Esophagus muscularis mucosa (tissue), 4 donors: ENCODE measurements at regions of chr2 and their contacts with region 1.

Region 1: DNA sequence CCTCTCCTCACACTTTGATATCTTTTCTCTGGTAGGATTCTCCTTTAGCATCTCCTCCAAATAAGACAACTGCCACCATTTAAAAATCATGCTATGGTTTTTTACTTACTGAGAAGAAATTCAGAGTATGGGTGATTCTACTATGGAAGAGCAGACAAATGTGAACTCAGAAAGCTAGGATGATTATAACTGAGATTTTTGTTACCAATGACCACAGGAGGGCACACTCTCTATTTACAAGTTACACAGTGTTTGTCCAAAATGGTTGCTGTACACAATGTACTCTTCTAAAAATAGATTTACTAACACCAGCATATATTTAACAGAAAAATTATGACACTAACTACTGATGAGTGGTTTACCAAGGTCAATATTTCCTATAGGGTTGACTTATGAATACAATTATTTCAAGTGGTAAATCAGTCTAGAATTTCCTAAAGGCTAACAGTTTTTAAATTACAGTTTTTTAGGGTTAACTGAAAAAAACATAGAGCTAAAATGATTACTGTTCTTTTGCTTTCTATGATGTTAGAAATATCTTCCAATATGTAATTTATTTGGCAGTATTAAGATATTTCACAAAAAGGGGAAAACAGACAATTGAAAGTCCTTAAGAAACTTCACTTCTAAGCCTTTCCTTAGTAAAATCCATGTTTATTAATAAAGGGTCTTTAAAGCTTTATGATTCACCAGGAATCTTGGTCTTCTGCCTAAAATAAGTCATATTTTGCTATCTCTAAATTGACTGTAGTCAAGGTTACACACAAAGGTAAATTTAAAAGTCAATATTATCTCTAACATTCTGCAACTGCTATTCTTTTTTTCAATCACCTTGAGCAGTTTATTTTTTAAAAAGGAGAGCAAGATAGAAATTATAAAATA is 57.2 kb downstream of the MAP4K3 start:
- DNase-seq: no peak
- H3K4me3 ChIP-seq: no peak overlapping the region
- H3K27ac ChIP-seq: peak overlapping the region; percentile 34 to 54 (median 40)
- H3K4me1 ChIP-seq: peaks cover 31 to 52% (median 50%) of the 10 kb centered on the region in 4 donors
- H3K27me3 ChIP-seq: no peaks in the 10 kb centered on the region
- CTCF ChIP-seq: peak; percentile 56 to 66 (median 62)
- EP300 ChIP-seq: no peak
- POLR2A ChIP-seq: no peak

Region 2: DNA sequence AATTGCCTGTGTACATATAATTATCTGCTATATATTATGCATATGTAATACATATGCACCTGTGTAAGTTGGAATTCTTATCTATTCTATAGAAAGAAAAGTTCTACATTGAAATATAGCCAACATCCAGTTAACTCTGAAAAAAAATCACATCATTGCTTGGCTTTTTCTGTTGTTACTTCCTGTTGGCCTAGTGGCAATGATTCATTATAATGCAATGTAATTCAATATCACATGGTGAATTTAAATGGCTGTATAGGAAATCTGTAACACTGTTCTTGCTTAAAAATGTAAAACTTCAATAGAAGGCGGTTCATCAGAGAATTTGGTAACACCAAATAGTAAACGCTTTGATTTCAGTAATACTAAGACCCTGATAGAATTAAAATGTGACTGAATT is 101.7 kb after region 1 on chr2:
- intact Hi-C with region 1: loop called (anchors 5 kb)
- DNase-seq: no peak
- H3K4me3 ChIP-seq: no peak overlapping the region
- H3K27ac ChIP-seq: no peak overlapping the region
- H3K4me1 ChIP-seq: peaks cover 11 to 18% (median 14%) of the 10 kb centered on the region in 4 donors
- H3K27me3 ChIP-seq: no peaks in the 10 kb centered on the region
- CTCF ChIP-seq: no peak
- EP300 ChIP-seq: no peak
- POLR2A ChIP-seq: no peak

Region 3: GRCh38 chr2:39523308-39524044 is 143.6 kb after region 1 on chr2:
- intact Hi-C with region 1: loop called (anchors 10 kb)
- DNase-seq: no peak
- H3K4me3 ChIP-seq: no peak overlapping the region
- H3K27ac ChIP-seq: no peak overlapping the region
- H3K4me1 ChIP-seq: peaks cover 0 to 39% (median 28%) of the 10 kb centered on the region in 4 donors
- H3K27me3 ChIP-seq: no peaks in the 10 kb centered on the region
- CTCF ChIP-seq: no peak
- EP300 ChIP-seq: no peak
- POLR2A ChIP-seq: no peak